Activated CD8-positive, alpha-beta T cell treated with anti-CD3 and anti-CD28 coated beads for 36 hours (primary cell): ENCODE measurements at regions of chr5 and their contacts with region 1.

Region 1: GRCh38 chr5:132456296-132457001 is 34.1 kb downstream of the IRF1 start:
- DNase-seq: peak; percentile 79
- ATAC-seq: peak; percentile 59
- H3K4me3 Mint-ChIP-seq: peak overlapping the region; percentile 38
- H3K27ac Mint-ChIP-seq: peak overlapping the region; percentile 94
- H3K4me1 Mint-ChIP-seq: peaks cover 85% of the 10 kb centered on the region
- H3K27me3 Mint-ChIP-seq: no peaks in the 10 kb centered on the region
- CTCF ChIP-seq: no peak

Region 2: DNA sequence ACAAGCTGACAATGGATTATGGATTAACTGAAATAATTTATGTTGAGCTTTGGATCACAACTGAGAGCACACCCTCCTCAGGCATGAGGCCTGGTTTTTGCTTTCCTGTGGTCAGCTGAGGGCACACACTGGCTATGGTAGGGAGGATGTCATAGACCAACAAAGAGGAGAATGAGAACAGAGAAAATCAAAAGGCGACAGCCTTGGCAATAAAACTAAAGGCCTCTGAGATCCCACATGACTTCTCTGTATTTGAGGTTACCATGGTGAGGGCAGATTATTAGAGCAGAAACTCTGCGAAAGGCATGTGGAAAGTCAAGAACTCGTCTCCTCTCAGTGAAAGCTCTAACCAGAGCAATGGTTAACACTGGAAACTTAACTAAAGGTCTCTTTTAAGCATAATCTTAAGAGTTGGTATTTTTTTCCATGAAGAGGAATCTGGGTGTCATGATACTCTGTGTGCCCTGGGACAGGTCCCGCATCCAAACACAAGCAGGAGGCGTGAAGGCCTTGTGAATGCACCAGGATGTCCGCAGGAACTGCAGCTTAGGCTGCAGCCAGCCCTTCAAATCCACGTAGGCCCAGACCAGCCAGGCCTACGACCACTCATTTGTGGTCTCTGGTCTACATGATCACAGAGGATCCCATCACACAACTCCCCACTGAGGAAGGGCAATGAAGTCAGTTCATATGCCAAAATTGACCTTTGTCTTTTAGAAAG is 498.6 kb before region 1 on chr5:
- CTCF ChIA-PET with region 1: no interaction called
- POLR2A ChIA-PET with region 1: no interaction called
- intact Hi-C with region 1: no loop called
- DNase-seq: no peak
- ATAC-seq: no peak
- H3K4me3 Mint-ChIP-seq: no peak overlapping the region
- H3K27ac Mint-ChIP-seq: peak overlapping the region; percentile 4
- H3K4me1 Mint-ChIP-seq: peaks cover 19% of the 10 kb centered on the region
- H3K27me3 Mint-ChIP-seq: no peaks in the 10 kb centered on the region
- CTCF ChIP-seq: no peak

Region 3: DNA sequence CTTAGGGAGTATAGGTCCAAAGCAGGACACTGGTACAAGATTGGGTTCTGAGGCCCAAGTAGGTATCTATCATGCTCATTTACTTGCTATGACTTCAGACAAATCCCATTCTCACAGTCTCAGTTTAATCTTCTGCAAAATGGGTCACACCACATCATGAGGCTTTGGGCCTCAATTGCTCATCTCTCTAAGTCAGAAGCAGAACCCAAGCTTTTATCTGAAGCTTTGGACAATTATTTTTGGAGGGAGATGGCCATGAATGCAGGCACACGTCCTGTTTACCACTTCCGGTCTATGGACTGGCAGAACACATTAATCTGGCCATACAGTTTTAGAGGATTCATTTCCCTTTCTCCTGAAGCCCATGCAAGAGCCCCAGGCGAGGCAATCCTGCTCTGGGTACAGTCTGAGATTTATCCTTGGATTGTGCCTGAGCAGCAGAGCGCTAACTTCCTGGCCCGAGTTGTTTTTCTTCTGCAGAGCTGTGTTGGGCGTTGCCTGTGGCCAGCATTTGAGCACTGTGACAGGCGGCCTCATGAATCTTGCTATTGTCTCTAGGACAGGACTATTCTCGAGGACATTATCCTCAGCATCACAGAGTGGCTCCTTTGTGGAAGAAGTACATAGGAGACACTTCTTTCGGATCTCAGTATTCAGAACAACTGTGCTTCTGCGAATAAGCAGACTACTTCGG is 146.2 kb before region 1 on chr5:
- CTCF ChIA-PET with region 1: no interaction called
- POLR2A ChIA-PET with region 1: no interaction called
- intact Hi-C with region 1: no loop called
- DNase-seq: no peak
- ATAC-seq: no peak
- H3K4me3 Mint-ChIP-seq: no peak overlapping the region
- H3K27ac Mint-ChIP-seq: no peak overlapping the region
- H3K4me1 Mint-ChIP-seq: no peaks in the 10 kb centered on the region
- H3K27me3 Mint-ChIP-seq: no peaks in the 10 kb centered on the region
- CTCF ChIP-seq: no peak

Region 4: GRCh38 chr5:132410451-132411381 is 45.7 kb before region 1 on chr5:
- CTCF ChIA-PET with region 1: interaction called, 5 read pairs
- POLR2A ChIA-PET with region 1: interaction called, 12 read pairs
- intact Hi-C with region 1: no loop called
- DNase-seq: peak; percentile 89
- ATAC-seq: peak; percentile 71
- H3K4me3 Mint-ChIP-seq: peak overlapping the region; percentile 93
- H3K27ac Mint-ChIP-seq: peak overlapping the region; percentile 100
- H3K4me1 Mint-ChIP-seq: peaks cover 63% of the 10 kb centered on the region
- H3K27me3 Mint-ChIP-seq: no peaks in the 10 kb centered on the region
- CTCF ChIP-seq: peak; percentile 53

Region 5: GRCh38 chr5:132437604-132438266 is 18.7 kb before region 1 on chr5:
- CTCF ChIA-PET with region 1: interaction called, 18 read pairs
- POLR2A ChIA-PET with region 1: interaction called, 30 read pairs
- intact Hi-C with region 1: no loop called
- DNase-seq: peak; percentile 84
- ATAC-seq: peak; percentile 89
- H3K4me3 Mint-ChIP-seq: peak overlapping the region; percentile 53
- H3K27ac Mint-ChIP-seq: peak overlapping the region; percentile 88
- H3K4me1 Mint-ChIP-seq: peaks cover 84% of the 10 kb centered on the region
- H3K27me3 Mint-ChIP-seq: no peaks in the 10 kb centered on the region
- CTCF ChIP-seq: no peak

Region 6: DNA sequence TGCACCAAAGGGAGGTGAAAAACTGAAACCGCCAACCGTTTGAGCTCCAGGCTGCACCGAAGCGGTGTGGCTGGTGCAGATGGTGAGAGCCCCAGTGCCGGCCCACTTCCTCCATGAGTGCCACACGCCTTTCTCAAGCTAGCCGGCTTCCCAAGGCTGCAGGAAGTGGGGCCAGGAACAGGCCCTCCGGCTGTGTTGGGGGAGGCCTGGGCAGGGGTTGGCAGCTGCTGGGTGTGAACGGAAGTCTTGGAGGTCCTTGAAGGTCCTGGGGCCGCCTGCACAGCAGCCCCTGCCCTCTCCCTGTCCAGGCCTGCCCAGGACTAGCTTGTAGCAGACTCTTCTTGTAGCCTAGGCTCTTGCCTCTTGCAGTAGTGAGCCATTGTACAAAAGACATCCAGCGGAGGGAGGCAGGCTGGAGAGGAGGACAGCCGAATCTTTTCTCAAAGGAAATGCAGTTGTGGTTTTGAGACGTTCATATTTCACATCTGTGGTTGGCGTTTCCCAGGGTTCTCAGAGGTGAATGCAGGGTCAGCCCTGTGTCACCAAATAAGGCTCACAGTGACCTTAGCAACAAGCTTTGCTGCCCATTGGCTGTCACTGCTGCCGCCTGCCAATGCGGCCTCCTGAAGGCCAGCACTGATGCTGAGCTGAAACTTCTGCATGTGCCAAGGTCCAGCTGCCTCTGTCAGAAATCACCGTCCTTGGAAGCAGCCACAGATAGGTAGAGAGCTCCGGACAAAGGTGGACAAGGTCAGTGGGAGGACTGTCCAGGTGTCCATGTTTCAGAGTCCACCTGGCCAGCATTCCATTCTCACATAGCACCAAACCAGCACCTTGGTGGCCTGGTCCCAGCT is 10.2 kb after region 1 on chr5:
- CTCF ChIA-PET with region 1: interaction called, 24 read pairs
- POLR2A ChIA-PET with region 1: interaction called, 55 read pairs
- intact Hi-C with region 1: no loop called
- DNase-seq: peak; percentile 89
- ATAC-seq: peak; percentile 69
- H3K4me3 Mint-ChIP-seq: peak overlapping the region; percentile 66
- H3K27ac Mint-ChIP-seq: peak overlapping the region; percentile 88
- H3K4me1 Mint-ChIP-seq: peaks cover 87% of the 10 kb centered on the region
- H3K27me3 Mint-ChIP-seq: no peaks in the 10 kb centered on the region
- CTCF ChIP-seq: no peak

Region 7: GRCh38 chr5:132473019-132473531 is 16.6 kb after region 1 on chr5:
- CTCF ChIA-PET with region 1: interaction called, 24 read pairs
- POLR2A ChIA-PET with region 1: interaction called, 1,641 read pairs
- intact Hi-C with region 1: no loop called
- DNase-seq: peak; percentile 91
- ATAC-seq: peak; percentile 94
- H3K4me3 Mint-ChIP-seq: no peak overlapping the region
- H3K27ac Mint-ChIP-seq: peak overlapping the region; percentile 78
- H3K4me1 Mint-ChIP-seq: peaks cover 72% of the 10 kb centered on the region
- H3K27me3 Mint-ChIP-seq: no peaks in the 10 kb centered on the region
- CTCF ChIP-seq: no peak

Region 8: DNA sequence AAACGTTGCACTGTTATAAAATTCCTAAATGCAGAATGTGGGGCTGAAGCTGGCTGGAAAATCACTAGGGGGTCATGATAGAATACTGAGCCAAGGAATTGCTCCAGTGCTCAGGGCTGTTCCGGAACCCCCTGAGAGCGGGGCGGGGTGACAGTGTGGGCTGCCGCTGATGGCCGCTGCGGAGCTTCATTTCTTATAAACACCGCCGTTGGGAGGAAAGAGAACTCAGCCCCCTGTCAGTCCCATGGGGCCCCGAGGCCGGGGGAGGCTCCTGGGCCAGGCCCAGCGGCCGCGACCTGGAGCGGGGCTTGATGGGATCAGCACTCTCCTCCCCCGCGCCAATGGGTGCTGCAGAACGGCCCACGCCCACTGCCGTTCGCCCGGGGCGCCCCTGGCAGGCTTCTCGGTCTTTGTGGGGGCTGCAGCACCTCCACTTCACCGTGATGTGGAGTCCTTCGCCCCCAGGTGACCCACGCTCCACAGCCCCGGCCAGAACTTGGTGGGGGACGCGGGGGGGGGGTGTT is 39.3 kb after region 1 on chr5:
- CTCF ChIA-PET with region 1: interaction called, 6 read pairs
- POLR2A ChIA-PET with region 1: interaction called, 1,641 read pairs
- intact Hi-C with region 1: loop called (anchors 5 kb)
- DNase-seq: peak; percentile 94
- ATAC-seq: peak; percentile 60
- H3K4me3 Mint-ChIP-seq: peak overlapping the region; percentile 90
- H3K27ac Mint-ChIP-seq: peak overlapping the region; percentile 99
- H3K4me1 Mint-ChIP-seq: peaks cover 67% of the 10 kb centered on the region
- H3K27me3 Mint-ChIP-seq: no peaks in the 10 kb centered on the region
- CTCF ChIP-seq: no peak

Region 9: GRCh38 chr5:132759114-132760048 is 302.9 kb after region 1 on chr5:
- CTCF ChIA-PET with region 1: no interaction called
- POLR2A ChIA-PET with region 1: no interaction called
- intact Hi-C with region 1: no loop called
- DNase-seq: no peak
- ATAC-seq: no peak
- H3K4me3 Mint-ChIP-seq: no peak overlapping the region
- H3K27ac Mint-ChIP-seq: no peak overlapping the region
- H3K4me1 Mint-ChIP-seq: peaks cover 7% of the 10 kb centered on the region
- H3K27me3 Mint-ChIP-seq: no peaks in the 10 kb centered on the region
- CTCF ChIP-seq: no peak